ENCODE measurements at regions of chr1 and their contacts with region 1.

Region 1: GRCh38 chr1:153977250-153978240 is at the start of gene JTB:
- DNase-seq: peak; percentile 94
- H3K4me3 Mint-ChIP-seq: peak within 1 kb of the TSS; percentile 97
- H3K27ac Mint-ChIP-seq: peak within 1 kb of the TSS; percentile 95
- H3K4me1 Mint-ChIP-seq: peaks cover 37% of the 10 kb centered on the region
- H3K27me3 Mint-ChIP-seq: no peaks in the 10 kb centered on the region
- total RNA-seq, gene JTB: 126 to 131 TPM

Region 2: DNA sequence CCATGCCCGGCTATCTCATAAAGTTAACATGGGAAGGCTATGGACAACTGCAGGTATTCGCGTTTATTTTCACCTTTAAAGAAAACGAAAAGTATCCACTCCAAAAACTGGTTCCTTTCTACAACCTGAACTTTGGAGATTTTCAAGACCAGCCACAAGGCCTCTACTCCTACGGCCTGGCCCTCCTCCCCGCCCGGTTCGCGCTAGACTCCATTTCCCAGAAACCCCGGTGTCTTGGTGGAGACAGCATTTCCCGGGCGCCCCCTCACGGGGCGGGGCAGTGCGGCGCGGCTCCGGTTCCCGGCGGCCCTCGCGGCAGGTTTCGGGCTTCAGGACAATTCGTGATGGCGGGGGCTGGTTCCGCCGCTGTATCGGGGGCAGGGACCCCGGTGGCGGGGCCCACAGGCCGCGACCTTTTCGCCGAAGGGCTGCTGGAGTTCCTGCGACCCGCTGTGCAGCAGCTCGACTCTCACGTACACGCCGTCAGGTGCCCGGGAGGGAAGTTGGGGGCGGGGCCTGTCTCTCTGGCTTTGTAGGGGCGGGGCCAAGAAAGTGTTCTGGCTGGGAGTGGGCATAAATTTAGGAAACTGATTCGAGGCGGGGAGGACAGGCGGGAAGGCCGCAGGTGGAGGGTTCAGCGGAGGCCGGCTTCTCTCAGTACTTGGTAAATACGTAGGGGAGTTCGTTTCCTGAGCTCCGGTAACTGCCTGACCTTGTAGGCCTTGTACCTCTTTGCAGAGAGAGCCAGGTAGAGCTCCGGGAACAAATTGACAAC is 319.0 kb before region 1 on chr1 and contains the start of gene SNAPIN:
- CTCF ChIA-PET with region 1: interaction called, 3 read pairs
- intact Hi-C with region 1: loop called (anchors 5 kb)
- DNase-seq: peak; percentile 95
- H3K4me3 Mint-ChIP-seq: peak within 1 kb of the TSS; percentile 97
- H3K27ac Mint-ChIP-seq: peak within 1 kb of the TSS; percentile 94
- H3K4me1 Mint-ChIP-seq: peaks cover 15% of the 10 kb centered on the region
- H3K27me3 Mint-ChIP-seq: no peaks in the 10 kb centered on the region
- total RNA-seq, gene SNAPIN: 24.4 to 26.2 TPM

Region 3: DNA sequence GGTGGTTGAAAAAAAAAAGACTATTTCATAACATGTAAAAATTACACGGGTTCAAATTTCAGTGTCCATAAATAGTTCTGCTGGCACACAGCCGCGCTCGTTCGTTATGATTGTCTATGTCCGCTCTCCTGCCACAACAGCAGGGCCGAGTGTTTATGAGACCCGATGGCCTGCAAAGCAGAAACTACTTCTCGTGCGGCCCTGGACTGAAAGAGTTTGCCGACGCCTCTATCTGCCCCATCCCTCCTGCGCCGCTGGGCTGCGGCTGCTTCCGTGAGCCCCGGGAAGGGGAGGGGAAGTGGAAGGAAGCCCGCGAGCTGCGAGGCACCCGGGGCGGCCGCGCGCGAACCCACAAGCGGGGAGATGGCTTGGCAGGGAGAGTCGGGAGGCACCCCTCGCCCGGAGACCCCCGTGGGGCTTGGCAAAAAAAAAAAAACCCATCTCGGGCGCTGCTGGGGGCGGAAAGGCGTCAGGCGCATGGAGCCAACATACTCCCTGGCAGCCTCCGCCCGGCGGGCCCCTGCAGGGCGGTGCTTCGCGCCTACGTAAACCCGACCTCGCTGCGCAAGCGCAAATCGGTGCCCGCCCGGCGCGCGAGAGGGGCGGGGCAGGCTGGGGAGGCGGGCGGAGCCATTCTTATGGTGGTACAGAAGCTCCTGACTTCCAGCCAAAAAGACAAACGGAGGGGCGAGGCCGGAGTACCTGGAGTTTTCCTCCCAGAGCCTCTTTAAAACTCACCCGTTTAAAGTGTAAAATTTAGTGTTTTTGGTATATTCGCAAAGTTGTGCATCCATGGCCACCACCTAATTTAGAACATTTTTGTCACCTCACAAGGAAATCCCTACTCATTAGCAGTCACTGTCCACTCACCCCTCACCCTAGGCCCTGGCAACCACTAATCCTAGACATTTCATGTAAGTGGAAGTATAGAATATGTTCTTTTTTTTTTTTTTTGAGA is 194.0 kb before region 1 on chr1:
- CTCF ChIA-PET with region 1: no interaction called
- intact Hi-C with region 1: loop called (anchors 1 kb)
- DNase-seq: peak; percentile 93
- H3K4me3 Mint-ChIP-seq: peak overlapping the region; percentile 95
- H3K27ac Mint-ChIP-seq: peak overlapping the region; percentile 92
- H3K4me1 Mint-ChIP-seq: peaks cover 5% of the 10 kb centered on the region
- H3K27me3 Mint-ChIP-seq: no peaks in the 10 kb centered on the region

Region 4: DNA sequence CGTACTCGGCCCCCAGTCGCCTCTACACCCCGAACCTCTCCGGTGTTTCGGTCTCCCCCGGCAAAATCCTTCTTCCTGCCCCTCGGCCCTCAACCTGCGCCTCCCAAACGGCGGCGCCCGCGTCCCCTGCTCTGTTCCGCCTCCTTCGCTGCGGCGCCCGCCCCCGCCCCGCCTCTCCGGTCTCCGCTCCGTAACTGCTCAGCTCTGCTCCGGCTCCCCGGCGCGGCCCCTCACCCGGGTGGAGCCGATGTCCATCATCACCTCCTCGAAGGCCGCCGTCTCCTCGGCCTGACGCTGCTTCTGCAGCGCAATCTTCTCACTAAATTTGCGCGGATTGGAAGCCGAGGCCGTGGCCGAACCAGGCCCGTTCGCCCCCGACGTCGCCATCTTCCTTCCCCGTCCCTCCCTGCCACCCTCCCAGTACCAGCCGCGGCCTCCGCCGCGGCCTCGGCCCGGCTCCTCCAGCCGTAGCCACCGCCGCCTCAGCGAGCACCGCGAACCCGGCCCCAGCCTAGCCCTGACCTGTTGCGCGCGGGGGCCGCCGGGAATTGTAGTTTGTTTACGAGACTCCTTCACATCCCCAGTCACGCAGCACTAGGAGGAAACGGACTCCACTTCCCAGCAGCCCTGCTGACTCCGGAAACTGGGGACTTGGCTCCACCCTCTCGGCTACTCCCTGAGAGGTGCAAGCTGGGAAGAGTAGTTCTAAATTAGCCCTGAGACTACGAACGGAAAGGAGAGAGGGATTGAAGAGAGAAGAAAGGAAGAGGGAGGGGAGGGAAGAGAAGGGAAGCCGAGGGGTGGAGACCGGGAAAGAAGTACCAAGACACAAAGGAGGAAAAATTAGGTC is 19.2 kb before region 1 on chr1 and contains the start of gene CRTC2:
- CTCF ChIA-PET with region 1: interaction called, 10 read pairs
- intact Hi-C with region 1: loop called (anchors 1 kb)
- DNase-seq: peak; percentile 99
- H3K4me3 Mint-ChIP-seq: peak within 1 kb of the TSS; percentile 86
- H3K27ac Mint-ChIP-seq: peak within 1 kb of the TSS; percentile 92
- H3K4me1 Mint-ChIP-seq: peaks cover 53% of the 10 kb centered on the region
- H3K27me3 Mint-ChIP-seq: no peaks in the 10 kb centered on the region
- total RNA-seq, gene CRTC2: 72.6 to 83.0 TPM

Region 5: GRCh38 chr1:153967082-153968000 is 10.2 kb before region 1 on chr1 and contains the start of gene CREB3L4:
- CTCF ChIA-PET with region 1: interaction called, 16 read pairs
- intact Hi-C with region 1: loop called (anchors 1 kb)
- DNase-seq: peak; percentile 90
- H3K4me3 Mint-ChIP-seq: peak within 1 kb of the TSS; percentile 85
- H3K27ac Mint-ChIP-seq: peak within 1 kb of the TSS; percentile 94
- H3K4me1 Mint-ChIP-seq: peaks cover 42% of the 10 kb centered on the region
- H3K27me3 Mint-ChIP-seq: no peaks in the 10 kb centered on the region
- total RNA-seq, gene CREB3L4: 5.6 to 7.4 TPM